Activated CD4-positive, alpha-beta T cell treated with anti-CD3 and anti-CD28 coated beads, Interleukin-2, amount 10 ng/mL, durations not matched to agents 24 days and 14 days (primary cell): ENCODE measurements at regions of chr15 and their contacts with region 1.

Region 1: GRCh38 chr15:81000624-81001151 is at the start of gene TLNRD1:
- DNase-seq: peak; percentile 97
- H3K4me3 Mint-ChIP-seq: peak within 1 kb of the TSS; percentile 98
- H3K27ac Mint-ChIP-seq: peak within 1 kb of the TSS; percentile 98
- H3K4me1 Mint-ChIP-seq: peaks cover 49% of the 10 kb centered on the region
- H3K27me3 Mint-ChIP-seq: no peaks in the 10 kb centered on the region
- total RNA-seq, gene TLNRD1: 25.6 and 25.8 TPM in 2 replicates

Region 2: GRCh38 chr15:80942746-80943555 is 57.7 kb before region 1 on chr15:
- intact Hi-C with region 1: no loop called
- DNase-seq: no peak
- H3K4me3 Mint-ChIP-seq: no peak overlapping the region
- H3K27ac Mint-ChIP-seq: no peak overlapping the region
- H3K4me1 Mint-ChIP-seq: no peaks in the 10 kb centered on the region
- H3K27me3 Mint-ChIP-seq: no peaks in the 10 kb centered on the region

Region 3: GRCh38 chr15:80967451-80967850 is 33.2 kb before region 1 on chr15:
- intact Hi-C with region 1: no loop called
- DNase-seq: no peak
- H3K4me3 Mint-ChIP-seq: no peak overlapping the region
- H3K27ac Mint-ChIP-seq: no peak overlapping the region
- H3K4me1 Mint-ChIP-seq: peaks cover 12% of the 10 kb centered on the region
- H3K27me3 Mint-ChIP-seq: no peaks in the 10 kb centered on the region

Region 4: GRCh38 chr15:80989518-80990478 is 10.9 kb before region 1 on chr15 and contains the start of gene MESD:
- intact Hi-C with region 1: loop called (anchors 1 kb)
- DNase-seq: peak; percentile 98
- H3K4me3 Mint-ChIP-seq: peak within 1 kb of the TSS; percentile 98
- H3K27ac Mint-ChIP-seq: peak within 1 kb of the TSS; percentile 96
- H3K4me1 Mint-ChIP-seq: peaks cover 50% of the 10 kb centered on the region
- H3K27me3 Mint-ChIP-seq: no peaks in the 10 kb centered on the region
- total RNA-seq, gene MESD: 27.1 and 27.6 TPM in 2 replicates

Region 5: GRCh38 chr15:81023483-81024264 is 23.0 kb after region 1 on chr15:
- intact Hi-C with region 1: loop called (anchors 1 kb)
- DNase-seq: peak; percentile 76
- H3K4me3 Mint-ChIP-seq: peak overlapping the region; percentile 66
- H3K27ac Mint-ChIP-seq: peak overlapping the region; percentile 96
- H3K4me1 Mint-ChIP-seq: peaks cover 27% of the 10 kb centered on the region
- H3K27me3 Mint-ChIP-seq: no peaks in the 10 kb centered on the region

Region 6: GRCh38 chr15:81106560-81106959 is 105.9 kb after region 1 on chr15:
- intact Hi-C with region 1: loop called (anchors 1 kb)
- DNase-seq: peak; percentile 84
- H3K4me3 Mint-ChIP-seq: no peak overlapping the region
- H3K27ac Mint-ChIP-seq: no peak overlapping the region
- H3K4me1 Mint-ChIP-seq: peaks cover 12% of the 10 kb centered on the region
- H3K27me3 Mint-ChIP-seq: peaks cover 38% of the 10 kb centered on the region